IMR-90 (cell line): ENCODE measurements at regions of chr6 and their contacts with region 1.

Region 1: DNA sequence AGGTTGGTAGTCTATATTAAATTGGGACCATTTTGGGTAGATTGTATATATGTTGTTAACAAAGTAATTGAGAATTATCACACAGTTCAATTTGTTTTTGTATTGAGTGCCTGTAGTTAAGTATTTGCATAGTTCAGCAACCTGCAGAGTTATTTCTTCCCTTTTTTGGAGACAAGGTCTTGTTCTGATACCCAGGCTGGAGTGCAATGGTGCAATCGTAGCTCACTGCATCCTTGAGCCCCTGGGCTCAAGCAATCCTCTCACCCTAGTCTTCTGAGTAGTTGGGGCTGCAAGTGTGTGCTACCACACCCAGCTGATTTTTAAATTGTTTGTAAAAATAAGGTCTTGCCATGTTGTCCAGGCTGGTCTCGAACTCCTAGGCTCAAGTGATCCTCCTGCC is 250.5 kb downstream of the UTRN start:
- DNase-seq: no peak
- ATAC-seq: no peak
- H3K4me3 ChIP-seq: no peak overlapping the region
- H3K27ac ChIP-seq: no peak overlapping the region
- H3K4me1 ChIP-seq: no peaks in the 10 kb centered on the region
- H3K27me3 ChIP-seq: no peaks in the 10 kb centered on the region
- CTCF ChIP-seq: no peak
- POLR2A ChIP-seq: no peak
- RAD21 ChIP-seq: no peak

Region 2: DNA sequence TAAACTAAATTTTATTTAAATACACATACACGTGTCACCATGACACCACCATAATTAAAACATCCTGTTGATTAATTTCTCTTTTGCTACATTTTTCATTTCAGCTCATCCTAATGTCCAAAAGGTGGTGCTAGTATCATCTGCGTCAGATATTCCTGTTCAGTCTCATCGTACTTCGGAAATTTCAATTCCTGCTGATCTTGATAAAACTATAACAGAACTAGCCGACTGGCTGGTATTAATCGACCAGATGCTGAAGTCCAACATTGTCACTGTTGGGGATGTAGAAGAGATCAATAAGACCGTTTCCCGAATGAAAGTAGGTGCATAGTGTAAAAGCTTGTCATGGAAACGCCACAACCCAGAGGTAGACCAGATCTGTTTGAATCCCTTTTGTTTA is 12.9 kb after region 1 on chr6:
- CTCF ChIA-PET with region 1: no interaction called
- POLR2A ChIA-PET with region 1: no interaction called
- dilution Hi-C with region 1: no loop called
- in situ Hi-C with region 1: no loop called
- intact Hi-C with region 1: loop called (anchors 1 kb)
- DNase-seq: no peak
- ATAC-seq: no peak
- H3K4me3 ChIP-seq: no peak overlapping the region
- H3K27ac ChIP-seq: no peak overlapping the region
- H3K4me1 ChIP-seq: no peaks in the 10 kb centered on the region
- H3K27me3 ChIP-seq: no peaks in the 10 kb centered on the region
- CTCF ChIP-seq: no peak
- POLR2A ChIP-seq: no peak
- RAD21 ChIP-seq: no peak